ENCODE measurements at regions of chr17 and their contacts with region 1.

Region 1: GRCh38 chr17:75405365-75406221 is at the start of gene GRB2:
- DNase-seq: peak; percentile 99 to 100 (median 100)
- H3K4me3 ChIP-seq: peak within 1 kb of the TSS; percentile 88 to 92
- H3K4me3 Mint-ChIP-seq: peak within 1 kb of the TSS; percentile 96 to 99 (median 97)
- H3K27ac ChIP-seq: peak within 1 kb of the TSS; percentile 89
- H3K27ac Mint-ChIP-seq: peak within 1 kb of the TSS; percentile 91 to 99 (median 96)
- H3K4me1 ChIP-seq: peaks cover 43% of the 10 kb centered on the region
- H3K4me1 Mint-ChIP-seq: peaks cover 25 to 54% (median 37%) of the 10 kb centered on the region in 4 donors
- H3K27me3 ChIP-seq: no peaks in the 10 kb centered on the region
- H3K27me3 Mint-ChIP-seq: no peaks in the 10 kb centered on the region
- total RNA-seq, gene GRB2: 131 to 133 TPM

Region 2: GRCh38 chr17:75261336-75262111 is 144.1 kb before region 1 on chr17 and contains the starts of genes GGA3 and MRPS7:
- CTCF ChIA-PET with region 1: no interaction called
- POLR2A ChIA-PET with region 1: interaction called, 13 read pairs
- intact Hi-C with region 1: loop called (anchors 1 kb)
- DNase-seq: peak; percentile 95 to 99 (median 97)
- H3K4me3 ChIP-seq: peak within 1 kb of the TSS; percentile 77 to 99
- H3K4me3 Mint-ChIP-seq: peak within 1 kb of the TSS; percentile 93 to 99 (median 97)
- H3K27ac ChIP-seq: peak within 1 kb of the TSS; percentile 96
- H3K27ac Mint-ChIP-seq: peak within 1 kb of the TSS; percentile 100
- H3K4me1 ChIP-seq: peaks cover 35% of the 10 kb centered on the region
- H3K4me1 Mint-ChIP-seq: peaks cover 32 to 65% (median 48%) of the 10 kb centered on the region in 4 donors
- H3K27me3 ChIP-seq: no peaks in the 10 kb centered on the region
- H3K27me3 Mint-ChIP-seq: no peaks in the 10 kb centered on the region
- total RNA-seq, gene GGA3: 121 to 122 TPM
- total RNA-seq, gene MRPS7: 34.1 to 36.3 TPM

Region 3: GRCh38 chr17:75319904-75320691 is 85.5 kb before region 1 on chr17:
- CTCF ChIA-PET with region 1: interaction called, 63 read pairs
- POLR2A ChIA-PET with region 1: interaction called, 17 read pairs
- intact Hi-C with region 1: loop called (anchors 1 kb)
- DNase-seq: no peak
- H3K4me3 ChIP-seq: no peak overlapping the region
- H3K4me3 Mint-ChIP-seq: no peak overlapping the region
- H3K27ac ChIP-seq: no peak overlapping the region
- H3K27ac Mint-ChIP-seq: peak overlapping the region in 3 of 7 donors; percentile 2 to 32 (median 30)
- H3K4me1 ChIP-seq: peaks cover 10% of the 10 kb centered on the region
- H3K4me1 Mint-ChIP-seq: peaks cover 6 to 8% (median 7%) of the 10 kb centered on the region in 4 donors
- H3K27me3 ChIP-seq: no peaks in the 10 kb centered on the region
- H3K27me3 Mint-ChIP-seq: no peaks in the 10 kb centered on the region

Region 4: GRCh38 chr17:75393523-75394331 is 11.9 kb before region 1 on chr17:
- CTCF ChIA-PET with region 1: interaction called, 4 read pairs
- POLR2A ChIA-PET with region 1: interaction called, 31 read pairs
- intact Hi-C with region 1: loop called (anchors 1 kb)
- DNase-seq: peak; percentile 66 to 86 (median 75)
- H3K4me3 ChIP-seq: peak overlapping the region; percentile 30 to 60
- H3K4me3 Mint-ChIP-seq: peak overlapping the region; percentile 90 to 97 (median 95)
- H3K27ac ChIP-seq: peak overlapping the region; percentile 66
- H3K27ac Mint-ChIP-seq: peak overlapping the region; percentile 71 to 96 (median 89)
- H3K4me1 ChIP-seq: peaks cover 78% of the 10 kb centered on the region
- H3K4me1 Mint-ChIP-seq: peaks cover 63 to 88% (median 72%) of the 10 kb centered on the region in 4 donors
- H3K27me3 ChIP-seq: no peaks in the 10 kb centered on the region
- H3K27me3 Mint-ChIP-seq: no peaks in the 10 kb centered on the region

Region 5: DNA sequence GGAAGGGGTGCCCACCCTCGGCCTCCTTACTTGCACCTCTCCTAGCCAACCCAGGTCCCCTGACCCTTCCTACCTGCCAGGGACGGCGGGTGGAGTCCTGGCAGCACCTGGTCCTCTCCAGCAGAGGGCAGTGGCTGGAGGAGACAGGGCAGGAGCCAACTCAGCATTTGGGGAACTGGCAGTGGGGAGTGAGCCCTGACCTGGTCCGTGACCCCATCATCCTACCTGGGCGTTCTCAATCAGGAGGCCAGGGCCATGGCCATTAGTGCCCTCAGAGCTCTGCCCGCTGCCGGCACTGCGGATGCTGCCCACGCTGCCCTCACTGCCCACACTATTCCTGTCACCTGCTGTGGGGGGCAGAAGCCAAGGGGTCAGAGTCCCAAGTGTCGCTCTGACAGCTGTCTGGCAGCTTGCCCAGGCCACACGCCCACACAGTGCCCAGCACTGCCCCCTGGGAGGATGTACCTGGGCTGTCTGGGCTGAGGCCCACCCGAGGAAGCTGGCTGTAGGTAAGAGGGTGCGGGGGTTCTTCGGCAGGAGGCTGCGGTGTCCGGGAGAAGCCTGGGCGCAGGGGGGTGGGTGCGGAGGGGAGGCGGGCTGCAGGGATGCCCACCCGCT is 98.9 kb after region 1 on chr17:
- CTCF ChIA-PET with region 1: no interaction called
- POLR2A ChIA-PET with region 1: no interaction called
- intact Hi-C with region 1: no loop called
- DNase-seq: peak in 4 of 5 donors; percentile 23 to 34 (median 30)
- H3K4me3 ChIP-seq: no peak overlapping the region
- H3K4me3 Mint-ChIP-seq: no peak overlapping the region
- H3K27ac ChIP-seq: no peak overlapping the region
- H3K27ac Mint-ChIP-seq: no peak overlapping the region
- H3K4me1 ChIP-seq: no peaks in the 10 kb centered on the region
- H3K4me1 Mint-ChIP-seq: no peaks in the 10 kb centered on the region
- H3K27me3 ChIP-seq: no peaks in the 10 kb centered on the region
- H3K27me3 Mint-ChIP-seq: no peaks in the 10 kb centered on the region

Region 6: DNA sequence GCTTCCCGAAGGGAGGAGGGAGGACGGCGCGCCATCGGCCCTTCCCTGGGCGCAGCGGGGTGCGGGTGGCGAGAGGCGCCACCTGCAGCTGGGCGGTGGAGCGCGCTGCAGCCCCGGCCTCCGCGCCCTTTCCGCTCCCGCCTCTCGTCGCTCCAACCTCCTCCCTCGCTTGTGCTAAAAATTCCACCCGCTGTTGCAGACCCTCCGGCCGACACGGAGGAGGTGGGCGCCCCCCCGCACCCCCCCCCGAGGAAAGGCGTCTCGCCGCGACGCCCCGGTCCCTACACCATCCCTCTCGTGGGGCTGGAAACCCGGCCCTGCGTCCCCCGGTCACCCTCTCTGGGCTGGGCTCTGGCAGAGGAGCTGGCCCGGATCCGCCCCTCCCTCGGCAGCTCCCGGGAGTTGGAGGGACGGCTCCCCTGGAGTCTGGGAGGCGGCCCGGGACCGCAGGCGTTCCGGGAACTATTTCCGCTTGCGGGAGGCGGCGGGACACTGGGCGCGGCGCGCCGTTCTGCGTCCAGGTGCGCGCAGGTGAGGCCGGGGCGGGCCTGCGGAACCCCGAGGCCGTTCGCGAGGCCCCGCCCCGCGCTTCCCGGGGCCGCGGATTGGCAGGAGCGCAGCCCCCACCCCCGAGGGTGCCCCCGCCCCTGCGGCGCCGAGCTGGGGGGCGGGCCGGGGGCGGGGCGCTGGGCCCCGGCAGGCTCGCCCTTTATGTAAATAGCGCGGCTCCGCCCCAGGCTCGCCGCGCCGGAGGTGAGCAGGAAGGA is 119.5 kb after region 1 on chr17 and contains the start of gene LLGL2:
- CTCF ChIA-PET with region 1: no interaction called
- POLR2A ChIA-PET with region 1: interaction called, 9 read pairs
- intact Hi-C with region 1: loop called (anchors 1 kb)
- DNase-seq: peak; percentile 84 to 91 (median 90)
- H3K4me3 ChIP-seq: peak within 1 kb of the TSS; percentile 36 to 74
- H3K4me3 Mint-ChIP-seq: peak within 1 kb of the TSS; percentile 82 to 87 (median 84)
- H3K27ac ChIP-seq: peak within 1 kb of the TSS; percentile 56
- H3K27ac Mint-ChIP-seq: peak within 1 kb of the TSS; percentile 52 to 75 (median 67)
- H3K4me1 ChIP-seq: peaks cover 24% of the 10 kb centered on the region
- H3K4me1 Mint-ChIP-seq: peaks cover 8 to 17% (median 12%) of the 10 kb centered on the region in 4 donors
- H3K27me3 ChIP-seq: no peaks in the 10 kb centered on the region
- H3K27me3 Mint-ChIP-seq: no peaks in the 10 kb centered on the region
- total RNA-seq, gene LLGL2: 40.1 to 43.6 TPM

Measured in CD4-positive, alpha-beta memory T cell (primary cell).